ENCODE measurements at regions of chr21 and their contacts with region 1.

Region 1: GRCh38 chr21:33968080-33968994 is 52.7 kb upstream of the ATP5PO start:
- DNase-seq: peak; percentile 70
- H3K4me3 ChIP-seq: no peak overlapping the region
- H3K27ac ChIP-seq: peak overlapping the region; percentile 56
- H3K4me1 ChIP-seq: peaks cover 31% of the 10 kb centered on the region
- H3K27me3 ChIP-seq: no peaks in the 10 kb centered on the region
- CTCF ChIP-seq: no peak

Region 2: GRCh38 chr21:33884376-33885171 is 83.8 kb before region 1 on chr21:
- CTCF ChIA-PET with region 1: no interaction called
- dilution Hi-C with region 1: no loop called
- in situ Hi-C with region 1: no loop called
- intact Hi-C with region 1: no loop called
- DNase-seq: peak; percentile 8
- H3K4me3 ChIP-seq: peak overlapping the region in 1 of 3 experiments; percentile 17
- H3K27ac ChIP-seq: no peak overlapping the region
- H3K4me1 ChIP-seq: peaks cover 9% of the 10 kb centered on the region
- H3K27me3 ChIP-seq: peaks cover 6% of the 10 kb centered on the region
- CTCF ChIP-seq: no peak

Region 3: GRCh38 chr21:33947451-33948095 is 20.8 kb before region 1 on chr21:
- CTCF ChIA-PET with region 1: interaction called, 6 read pairs
- dilution Hi-C with region 1: no loop called
- in situ Hi-C with region 1: no loop called
- intact Hi-C with region 1: loop called (anchors 1 kb)
- DNase-seq: peak; percentile 98
- H3K4me3 ChIP-seq: peak overlapping the region; percentile 30 to 39 (median 37)
- H3K27ac ChIP-seq: peak overlapping the region; percentile 93
- H3K4me1 ChIP-seq: peaks cover 25% of the 10 kb centered on the region
- H3K27me3 ChIP-seq: no peaks in the 10 kb centered on the region
- CTCF ChIP-seq: no peak

Region 4: DNA sequence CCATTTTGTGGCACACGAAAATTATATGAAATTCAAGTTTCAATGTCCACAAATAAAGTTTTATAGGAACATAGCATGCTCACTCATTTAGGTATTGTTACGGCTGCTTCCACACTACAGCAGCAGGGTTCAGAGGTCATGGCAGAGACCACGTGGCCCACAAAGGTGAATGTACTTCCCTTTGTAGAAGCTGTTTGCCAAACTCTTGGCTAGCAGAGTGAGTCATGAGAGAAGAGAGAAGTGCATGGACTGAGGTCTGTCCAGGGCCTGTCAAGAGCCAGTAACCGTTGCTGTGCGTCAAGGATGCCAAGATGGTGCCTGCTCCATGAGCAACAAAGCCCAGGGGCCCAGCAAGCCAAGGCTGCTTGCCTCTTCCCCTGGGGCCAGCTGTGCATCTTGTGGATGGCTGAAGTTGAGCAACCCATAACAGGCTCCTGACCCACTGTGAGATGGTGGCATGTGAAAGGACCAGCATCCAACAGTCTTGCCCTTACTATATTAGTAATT is 12.0 kb after region 1 on chr21:
- CTCF ChIA-PET with region 1: no interaction called
- dilution Hi-C with region 1: no loop called
- in situ Hi-C with region 1: no loop called
- intact Hi-C with region 1: no loop called
- DNase-seq: no peak
- H3K4me3 ChIP-seq: no peak overlapping the region
- H3K27ac ChIP-seq: no peak overlapping the region
- H3K4me1 ChIP-seq: peaks cover 21% of the 10 kb centered on the region
- H3K27me3 ChIP-seq: no peaks in the 10 kb centered on the region
- CTCF ChIP-seq: no peak

Region 5: DNA sequence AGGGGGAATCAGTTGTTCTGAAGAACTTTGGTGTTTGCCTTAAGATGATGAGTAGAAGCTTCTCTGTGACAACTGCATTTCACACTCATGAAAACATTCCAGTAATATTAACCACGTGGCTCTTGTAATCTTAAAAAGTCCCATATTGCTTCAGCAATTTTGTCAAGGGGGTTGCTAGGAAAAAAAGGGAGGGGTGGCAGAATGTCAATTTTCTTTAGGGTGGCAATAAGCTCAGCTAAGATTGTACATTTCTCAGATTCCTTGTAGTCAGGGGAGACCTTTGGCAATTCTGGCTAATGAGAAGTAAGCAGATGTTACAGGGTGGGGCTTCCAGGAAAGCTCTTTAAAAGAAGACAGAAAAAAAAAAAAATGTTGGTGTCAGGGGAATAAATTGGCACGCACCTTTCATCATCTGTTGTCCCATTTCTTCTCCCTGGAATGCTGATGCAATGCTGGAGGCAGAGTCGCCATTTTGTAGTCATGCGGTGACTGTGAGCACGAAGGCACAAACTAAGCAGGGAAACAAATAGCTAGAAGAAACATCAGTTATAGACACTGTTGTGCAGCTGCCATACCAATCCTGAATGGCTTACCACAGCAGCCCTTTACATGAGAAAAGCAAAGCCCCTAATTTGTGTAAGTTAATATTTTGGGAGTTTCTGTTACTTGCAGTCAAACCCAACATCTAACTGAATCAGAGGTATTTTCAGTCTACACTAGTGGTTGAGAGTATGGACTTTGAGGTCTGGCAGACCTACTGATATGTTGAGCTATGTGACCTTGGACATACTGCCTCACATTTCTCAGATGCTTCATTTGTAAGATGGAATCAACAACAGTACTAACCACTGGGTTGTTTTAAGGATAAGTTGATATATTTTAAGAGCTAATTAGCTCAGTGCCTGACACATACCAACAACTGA is 49.0 kb after region 1 on chr21:
- CTCF ChIA-PET with region 1: no interaction called
- dilution Hi-C with region 1: loop called (anchors 5 kb)
- in situ Hi-C with region 1: no loop called
- intact Hi-C with region 1: no loop called
- DNase-seq: no peak
- H3K4me3 ChIP-seq: no peak overlapping the region
- H3K27ac ChIP-seq: no peak overlapping the region
- H3K4me1 ChIP-seq: no peaks in the 10 kb centered on the region
- H3K27me3 ChIP-seq: no peaks in the 10 kb centered on the region
- CTCF ChIP-seq: no peak

Region 6: GRCh38 chr21:34073032-34073869 is 104.9 kb after region 1 on chr21 and contains the starts of genes MRPS6 and SLC5A3:
- CTCF ChIA-PET with region 1: no interaction called
- dilution Hi-C with region 1: no loop called
- in situ Hi-C with region 1: no loop called
- intact Hi-C with region 1: no loop called
- DNase-seq: peak; percentile 76
- H3K4me3 ChIP-seq: peak within 1 kb of the TSS; percentile 88 to 90 (median 88)
- H3K27ac ChIP-seq: peak within 1 kb of the TSS; percentile 75
- H3K4me1 ChIP-seq: peaks cover 21% of the 10 kb centered on the region
- H3K27me3 ChIP-seq: no peaks in the 10 kb centered on the region
- CTCF ChIP-seq: no peak
- total RNA-seq, gene MRPS6: 10.2 to 65.9 TPM
- total RNA-seq, gene SLC5A3: 10.8 to 17.5 TPM

Measured in mammary epithelial cell (primary cell).